CD8-positive, alpha-beta memory T cell (primary cell): ENCODE measurements at regions of chr5 and their contacts with region 1.

Region 1: DNA sequence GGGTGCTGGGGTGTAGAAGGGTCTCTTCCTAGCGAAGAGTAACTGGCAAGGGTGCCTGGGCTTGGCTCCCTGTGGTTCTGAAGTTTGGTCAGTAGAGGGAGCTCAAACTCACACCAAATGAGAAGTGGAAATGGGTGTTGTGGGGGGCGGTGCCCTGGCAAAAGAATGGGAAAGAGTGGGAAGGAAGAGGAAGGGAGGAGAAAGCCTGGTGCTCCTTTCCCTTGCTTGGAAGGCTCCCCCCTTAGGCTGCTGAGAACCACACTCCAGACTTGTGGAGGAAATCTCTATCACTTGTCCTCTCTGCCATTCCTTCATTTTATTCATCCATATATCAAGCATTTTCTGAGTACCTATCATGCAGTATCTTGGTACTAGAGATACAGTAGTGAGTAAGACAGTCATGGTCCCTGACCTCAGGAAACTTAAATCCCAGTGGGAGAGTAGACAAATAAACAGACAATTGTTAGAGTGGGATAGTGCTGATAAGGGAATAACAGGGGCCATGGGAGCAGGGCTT is 13.0 kb downstream of the SLC4A9 start:
- DNase-seq: peak in 4 of 5 donors; percentile 13 to 55 (median 30)
- H3K4me3 ChIP-seq: no peak overlapping the region
- H3K4me3 Mint-ChIP-seq: no peak overlapping the region
- H3K27ac ChIP-seq: no peak overlapping the region
- H3K27ac Mint-ChIP-seq: peak overlapping the region in 2 of 8 donors; percentile 31 to 51
- H3K4me1 ChIP-seq: no peaks in the 10 kb centered on the region
- H3K4me1 Mint-ChIP-seq: peaks cover 3 to 5% (median 5%) of the 10 kb centered on the region in 3 donors
- H3K27me3 ChIP-seq: no peaks in the 10 kb centered on the region
- H3K27me3 Mint-ChIP-seq: no peaks in the 10 kb centered on the region

Region 2: GRCh38 chr5:140388052-140388451 is 15.0 kb after region 1 on chr5:
- CTCF ChIA-PET with region 1: interaction called, 11 read pairs
- POLR2A ChIA-PET with region 1: interaction called, 3 read pairs
- DNase-seq: no peak
- H3K4me3 ChIP-seq: no peak overlapping the region
- H3K4me3 Mint-ChIP-seq: no peak overlapping the region
- H3K27ac ChIP-seq: no peak overlapping the region
- H3K27ac Mint-ChIP-seq: no peak overlapping the region
- H3K4me1 ChIP-seq: no peaks in the 10 kb centered on the region
- H3K4me1 Mint-ChIP-seq: peaks cover 0 to 2% (median 0%) of the 10 kb centered on the region in 3 donors
- H3K27me3 ChIP-seq: no peaks in the 10 kb centered on the region
- H3K27me3 Mint-ChIP-seq: peaks cover 0 to 2% of the 10 kb centered on the region in 2 donors

Region 3: GRCh38 chr5:140401362-140402257 is 28.6 kb after region 1 on chr5 and contains the start of gene ANKHD1:
- CTCF ChIA-PET with region 1: interaction called, 16 read pairs
- POLR2A ChIA-PET with region 1: no interaction called
- DNase-seq: peak; percentile 93 to 99 (median 98)
- H3K4me3 ChIP-seq: peak within 1 kb of the TSS; percentile 90
- H3K4me3 Mint-ChIP-seq: no peak within 1 kb of the TSS
- H3K27ac ChIP-seq: peak within 1 kb of the TSS; percentile 93
- H3K27ac Mint-ChIP-seq: peak within 1 kb of the TSS in 1 of 8 donors; percentile 90
- H3K4me1 ChIP-seq: peaks cover 44% of the 10 kb centered on the region
- H3K4me1 Mint-ChIP-seq: peaks cover 37 to 43% (median 41%) of the 10 kb centered on the region in 3 donors
- H3K27me3 ChIP-seq: no peaks in the 10 kb centered on the region
- H3K27me3 Mint-ChIP-seq: peaks cover 0 to 2% of the 10 kb centered on the region in 2 donors
- total RNA-seq, gene ANKHD1: 100 to 107 TPM

Region 4: DNA sequence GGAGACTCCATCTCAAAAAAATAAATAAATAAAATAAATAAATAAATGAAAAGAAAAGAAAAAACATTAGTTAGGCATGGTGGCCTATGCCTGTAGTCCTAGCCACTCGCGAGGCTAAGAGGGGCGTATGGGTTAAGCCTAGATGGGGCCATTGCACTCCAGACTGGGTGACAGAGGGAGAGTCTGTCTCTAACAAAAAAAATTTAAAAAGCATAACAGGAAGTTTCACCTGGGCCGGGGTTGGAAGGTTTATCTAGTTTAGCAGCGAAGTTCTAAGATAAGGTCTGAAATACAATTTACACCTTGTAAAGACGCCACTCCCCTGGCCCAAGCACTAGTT is 345.2 kb after region 1 on chr5:
- CTCF ChIA-PET with region 1: interaction called, 21 read pairs
- POLR2A ChIA-PET with region 1: no interaction called
- DNase-seq: no peak
- H3K4me3 ChIP-seq: no peak overlapping the region
- H3K4me3 Mint-ChIP-seq: peak overlapping the region in 3 of 7 donors; percentile 43 to 64 (median 47)
- H3K27ac ChIP-seq: peak overlapping the region; percentile 54
- H3K27ac Mint-ChIP-seq: peak overlapping the region in 1 of 8 donors; percentile 15
- H3K4me1 ChIP-seq: no peaks in the 10 kb centered on the region
- H3K4me1 Mint-ChIP-seq: peaks cover 0 to 1% (median under 1%) of the 10 kb centered on the region in 3 donors
- H3K27me3 ChIP-seq: no peaks in the 10 kb centered on the region
- H3K27me3 Mint-ChIP-seq: no peaks in the 10 kb centered on the region

Region 5: GRCh38 chr5:140725799-140726471 is 352.9 kb after region 1 on chr5:
- CTCF ChIA-PET with region 1: interaction called, 15 read pairs
- POLR2A ChIA-PET with region 1: no interaction called
- DNase-seq: peak; percentile 43 to 75 (median 52)
- H3K4me3 ChIP-seq: peak overlapping the region; percentile 20
- H3K4me3 Mint-ChIP-seq: peak overlapping the region; percentile 67 to 83 (median 79)
- H3K27ac ChIP-seq: peak overlapping the region; percentile 61
- H3K27ac Mint-ChIP-seq: peak overlapping the region; percentile 0 to 89 (median 75)
- H3K4me1 ChIP-seq: no peaks in the 10 kb centered on the region
- H3K4me1 Mint-ChIP-seq: peaks cover 13 to 23% (median 21%) of the 10 kb centered on the region in 3 donors
- H3K27me3 ChIP-seq: no peaks in the 10 kb centered on the region
- H3K27me3 Mint-ChIP-seq: peaks cover 7 to 15% of the 10 kb centered on the region in 2 donors